Endothelial cell of umbilical vein (primary cell): ENCODE measurements at regions of chr21 and their contacts with region 1.

Region 1: GRCh38 chr21:33655591-33656221 is 13.4 kb downstream of the ITSN1 start:
- DNase-seq: peak; percentile 90
- H3K4me3 ChIP-seq: no peak overlapping the region
- H3K27ac ChIP-seq: peak overlapping the region; percentile 81
- H3K4me1 ChIP-seq: peaks cover 52% of the 10 kb centered on the region
- H3K27me3 ChIP-seq: no peaks in the 10 kb centered on the region
- CTCF ChIP-seq: no peak
- POLR2A ChIP-seq: no peak

Region 2: DNA sequence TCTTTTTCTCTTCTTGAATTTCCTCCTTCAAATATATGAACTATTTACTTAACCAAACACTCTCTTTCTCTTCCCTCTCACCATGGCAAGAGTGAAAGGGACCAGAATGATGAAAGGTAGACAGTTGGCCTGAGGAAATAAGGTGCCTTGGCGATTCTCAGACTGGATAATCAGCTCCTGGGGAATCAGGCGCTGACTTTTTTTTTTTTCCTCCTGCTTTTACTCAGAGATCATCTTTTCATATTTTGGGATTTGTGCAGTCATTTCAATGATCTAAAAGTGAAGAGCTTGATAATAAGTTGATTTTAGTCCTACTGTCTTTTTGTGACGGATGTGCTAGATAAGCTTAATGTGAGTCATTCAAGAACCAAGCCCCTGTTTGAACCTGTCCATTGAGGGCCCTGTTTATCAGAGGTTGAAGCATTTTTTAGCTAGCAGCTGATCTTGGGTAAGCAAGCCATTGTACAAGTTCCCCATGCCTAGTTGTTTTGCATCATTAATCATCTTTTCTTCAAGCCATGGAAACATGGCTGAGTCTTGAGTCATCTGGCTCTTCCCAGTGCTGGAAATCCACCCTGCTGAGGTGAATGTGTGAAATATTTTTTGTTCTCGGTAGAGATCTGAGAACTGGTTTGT is 27.4 kb after region 1 on chr21:
- CTCF ChIA-PET with region 1: interaction called, 6 read pairs
- POLR2A ChIA-PET with region 1: no interaction called
- dilution Hi-C with region 1: no loop called
- intact Hi-C with region 1: loop called (anchors 1 kb)
- DNase-seq: peak; percentile 90
- H3K4me3 ChIP-seq: no peak overlapping the region
- H3K27ac ChIP-seq: peak overlapping the region; percentile 93
- H3K4me1 ChIP-seq: peaks cover 44% of the 10 kb centered on the region
- H3K27me3 ChIP-seq: no peaks in the 10 kb centered on the region
- CTCF ChIP-seq: no peak
- POLR2A ChIP-seq: no peak

Region 3: DNA sequence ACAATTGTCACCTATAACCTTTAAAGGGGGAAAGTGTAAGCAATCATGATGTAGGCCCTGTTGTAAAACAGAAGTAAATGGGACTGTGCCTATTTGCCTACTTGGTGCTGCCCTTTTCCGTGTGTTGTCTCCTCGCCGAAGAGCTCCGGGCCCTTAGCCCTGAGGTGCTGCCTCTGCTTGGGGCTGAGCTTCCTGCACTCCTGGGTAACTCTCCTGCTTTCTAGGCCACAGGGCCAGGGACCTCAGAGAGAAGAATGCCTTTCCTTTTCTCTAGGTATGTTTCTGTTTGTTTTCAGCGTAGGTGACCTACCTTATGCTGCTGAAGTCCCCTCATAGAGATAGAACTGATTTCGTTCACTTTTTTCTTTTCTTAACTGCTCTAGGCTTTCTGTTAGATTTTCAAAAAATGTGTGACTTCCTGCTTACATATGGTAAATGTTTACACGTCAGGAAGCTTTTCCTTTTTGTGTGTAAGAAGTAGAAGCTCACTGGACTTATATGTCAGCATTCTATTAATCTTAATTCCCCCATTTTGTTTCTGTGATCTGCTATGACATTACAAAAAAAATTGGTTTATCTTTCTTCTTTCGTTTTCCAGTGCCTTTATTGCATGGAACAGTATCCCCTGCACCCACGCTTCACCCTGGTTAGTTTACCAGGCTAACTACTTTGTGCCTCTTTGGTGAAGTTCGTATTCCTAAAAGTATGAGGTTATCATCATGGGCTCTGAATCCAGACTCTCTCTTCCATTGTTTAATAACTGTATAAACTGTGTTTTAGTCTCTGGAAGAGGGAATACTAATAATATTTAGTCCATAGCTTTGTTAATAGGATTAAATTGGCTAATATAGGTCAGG is 48.3 kb after region 1 on chr21:
- CTCF ChIA-PET with region 1: no interaction called
- POLR2A ChIA-PET with region 1: no interaction called
- dilution Hi-C with region 1: no loop called
- intact Hi-C with region 1: loop called (anchors 5 kb)
- DNase-seq: peak; percentile 51
- H3K4me3 ChIP-seq: no peak overlapping the region
- H3K27ac ChIP-seq: peak overlapping the region; percentile 34
- H3K4me1 ChIP-seq: peaks cover 14% of the 10 kb centered on the region
- H3K27me3 ChIP-seq: no peaks in the 10 kb centered on the region
- CTCF ChIP-seq: no peak
- POLR2A ChIP-seq: no peak

Region 4: DNA sequence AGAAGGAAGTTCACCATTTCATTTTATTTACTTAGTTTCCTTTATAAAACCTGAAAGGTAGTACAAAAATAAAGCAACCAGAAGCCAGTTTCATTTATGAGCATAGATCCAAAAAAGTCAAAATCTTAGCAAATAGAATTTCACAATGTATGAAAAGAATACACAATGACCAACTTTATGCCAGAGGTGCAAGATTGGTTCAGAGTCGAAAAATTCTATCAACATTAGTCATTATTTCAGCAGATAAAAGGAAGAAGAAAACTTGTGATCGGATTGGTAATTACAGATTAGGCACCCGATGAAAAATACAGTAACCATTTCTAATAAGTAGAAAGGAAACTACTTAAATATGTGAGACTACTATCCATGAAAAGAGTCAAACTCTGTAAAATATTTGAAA is 75.7 kb after region 1 on chr21:
- CTCF ChIA-PET with region 1: no interaction called
- POLR2A ChIA-PET with region 1: no interaction called
- dilution Hi-C with region 1: no loop called
- intact Hi-C with region 1: no loop called
- DNase-seq: no peak
- H3K4me3 ChIP-seq: no peak overlapping the region
- H3K27ac ChIP-seq: no peak overlapping the region
- H3K4me1 ChIP-seq: peaks cover 5% of the 10 kb centered on the region
- H3K27me3 ChIP-seq: no peaks in the 10 kb centered on the region
- CTCF ChIP-seq: no peak
- POLR2A ChIP-seq: no peak

Region 5: GRCh38 chr21:33767236-33767635 is 111.5 kb after region 1 on chr21:
- CTCF ChIA-PET with region 1: interaction called, 3 read pairs
- POLR2A ChIA-PET with region 1: no interaction called
- dilution Hi-C with region 1: no loop called
- intact Hi-C with region 1: loop called (anchors 2 kb)
- DNase-seq: no peak
- H3K4me3 ChIP-seq: no peak overlapping the region
- H3K27ac ChIP-seq: no peak overlapping the region
- H3K4me1 ChIP-seq: peaks cover 33% of the 10 kb centered on the region
- H3K27me3 ChIP-seq: no peaks in the 10 kb centered on the region
- CTCF ChIP-seq: no peak
- POLR2A ChIP-seq: no peak

Region 6: DNA sequence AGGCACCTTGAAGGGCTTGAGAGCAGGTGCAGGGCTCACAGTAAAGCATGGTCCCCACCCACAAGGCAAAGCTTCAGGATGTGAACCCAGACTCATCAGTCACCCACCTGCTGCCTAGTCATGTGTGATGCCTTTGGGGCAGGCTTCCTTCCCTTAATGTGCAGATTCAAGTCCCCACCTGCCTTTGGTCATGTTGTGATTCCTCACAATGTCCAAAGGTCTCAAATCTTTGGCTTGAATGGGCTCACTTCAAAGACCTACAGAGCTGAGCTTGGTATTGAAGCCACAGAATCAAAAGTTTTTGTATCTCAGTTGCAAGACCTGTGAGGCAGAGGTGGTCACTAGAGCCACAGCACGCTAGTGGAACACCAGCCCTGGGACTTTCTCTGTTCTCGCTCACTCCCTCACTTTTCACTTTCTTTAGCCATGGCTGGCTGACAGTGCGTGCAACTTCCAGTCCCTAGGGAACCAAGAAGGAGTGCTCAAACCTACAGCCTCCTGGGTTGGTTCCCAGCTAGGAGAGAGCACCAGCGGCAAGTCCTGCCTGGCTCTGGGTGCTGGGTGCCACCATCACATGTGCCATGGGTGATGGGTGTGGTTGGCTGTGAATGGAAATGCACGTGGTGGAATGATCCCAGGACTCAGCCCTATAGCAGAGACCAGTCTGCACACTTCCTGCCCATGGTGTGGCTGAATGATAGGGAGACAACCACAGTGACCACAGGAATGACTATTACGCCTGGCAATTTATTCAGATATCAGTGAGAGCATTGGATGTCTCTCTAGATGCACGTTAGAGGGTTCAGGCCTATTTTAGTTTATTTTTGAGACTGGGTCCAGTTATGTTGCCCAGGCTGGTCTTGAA is 986.7 kb after region 1 on chr21:
- CTCF ChIA-PET with region 1: no interaction called
- POLR2A ChIA-PET with region 1: no interaction called
- dilution Hi-C with region 1: no loop called
- intact Hi-C with region 1: no loop called
- DNase-seq: no peak
- H3K4me3 ChIP-seq: no peak overlapping the region
- H3K27ac ChIP-seq: no peak overlapping the region
- H3K4me1 ChIP-seq: peaks cover 5% of the 10 kb centered on the region
- H3K27me3 ChIP-seq: no peaks in the 10 kb centered on the region
- CTCF ChIP-seq: no peak
- POLR2A ChIP-seq: no peak